AG04450 (cell line): ENCODE measurements at regions of chr7 and their contacts with region 1.

Region 1: GRCh38 chr7:39609113-39609934 is 14.0 kb upstream of the RALA start:
- DNase-seq: no peak
- H3K4me3 ChIP-seq: peak overlapping the region; percentile 44
- H3K27ac ChIP-seq: peak overlapping the region; percentile 96
- H3K27me3 ChIP-seq: no peaks in the 10 kb centered on the region
- CTCF ChIP-seq: 0 out of 2 replicates have a peak, but pooled peaks have one; percentile 13

Region 2: GRCh38 chr7:39184380-39184779 is 424.9 kb before region 1 on chr7:
- CTCF ChIA-PET with region 1: no interaction called
- POLR2A ChIA-PET with region 1: no interaction called
- DNase-seq: no peak
- H3K4me3 ChIP-seq: no peak overlapping the region
- H3K27ac ChIP-seq: no peak overlapping the region
- H3K27me3 ChIP-seq: no peaks in the 10 kb centered on the region
- CTCF ChIP-seq: no peak

Region 3: GRCh38 chr7:39623018-39623731 is 13.9 kb after region 1 on chr7 and contains the start of gene RALA:
- CTCF ChIA-PET with region 1: interaction called, 4 read pairs
- POLR2A ChIA-PET with region 1: interaction called, 16 read pairs
- DNase-seq: peak; percentile 85
- H3K4me3 ChIP-seq: peak within 1 kb of the TSS; percentile 76
- H3K27ac ChIP-seq: peak within 1 kb of the TSS; percentile 97
- H3K27me3 ChIP-seq: no peaks in the 10 kb centered on the region
- CTCF ChIP-seq: no peak
- polyA plus RNA-seq, gene RALA: 45.0 and 59.2 TPM in 2 replicates

Region 4: DNA sequence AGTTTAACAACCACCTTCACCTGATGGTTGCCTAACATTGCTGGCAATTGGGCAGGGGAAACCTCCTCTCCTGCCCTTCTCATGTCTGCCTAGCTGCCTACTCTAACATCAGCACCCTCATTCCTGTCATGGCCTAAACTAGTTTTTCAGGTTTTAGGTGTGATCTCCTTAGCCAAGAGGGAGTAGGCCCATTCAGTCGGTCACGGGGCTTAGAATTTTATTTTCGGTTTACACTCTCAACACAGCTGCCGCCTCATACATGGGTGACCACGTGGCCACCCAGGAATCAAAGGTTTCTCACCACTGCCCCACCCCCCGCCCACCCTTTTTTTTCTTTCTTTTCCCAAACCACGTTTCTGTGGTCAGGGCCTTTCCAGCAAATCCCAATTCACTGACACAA is 111.2 kb after region 1 on chr7:
- CTCF ChIA-PET with region 1: no interaction called
- POLR2A ChIA-PET with region 1: no interaction called
- DNase-seq: no peak
- H3K4me3 ChIP-seq: no peak overlapping the region
- H3K27ac ChIP-seq: no peak overlapping the region
- H3K27me3 ChIP-seq: no peaks in the 10 kb centered on the region
- CTCF ChIP-seq: no peak

Region 5: GRCh38 chr7:39825401-39825980 is 216.2 kb after region 1 on chr7:
- CTCF ChIA-PET with region 1: no interaction called
- POLR2A ChIA-PET with region 1: no interaction called
- DNase-seq: no peak
- H3K4me3 ChIP-seq: no peak overlapping the region
- H3K27ac ChIP-seq: no peak overlapping the region
- H3K27me3 ChIP-seq: peaks cover 17% of the 10 kb centered on the region
- CTCF ChIP-seq: no peak